ENCODE measurements at regions of chr4 and their contacts with region 1.

Region 1: GRCh38 chr4:173370477-173371291 is at the start of gene SAP30:
- DNase-seq: peak; percentile 99
- ATAC-seq: peak; percentile 95
- total RNA-seq, gene SAP30: 12.9 TPM

Region 2: GRCh38 chr4:173334085-173334772 is 36.5 kb before region 1 on chr4 and contains the start of gene HMGB2:
- intact Hi-C with region 1: loop called (anchors 5 kb)
- DNase-seq: peak; percentile 100
- ATAC-seq: peak; percentile 96
- total RNA-seq, gene HMGB2: 35.2 TPM

Measured in Right ventricle myocardium superior (tissue), 1 donor.